Right cardiac atrium (tissue), 5 donors: ENCODE measurements at regions of chr3 and their contacts with region 1.

Region 1: DNA sequence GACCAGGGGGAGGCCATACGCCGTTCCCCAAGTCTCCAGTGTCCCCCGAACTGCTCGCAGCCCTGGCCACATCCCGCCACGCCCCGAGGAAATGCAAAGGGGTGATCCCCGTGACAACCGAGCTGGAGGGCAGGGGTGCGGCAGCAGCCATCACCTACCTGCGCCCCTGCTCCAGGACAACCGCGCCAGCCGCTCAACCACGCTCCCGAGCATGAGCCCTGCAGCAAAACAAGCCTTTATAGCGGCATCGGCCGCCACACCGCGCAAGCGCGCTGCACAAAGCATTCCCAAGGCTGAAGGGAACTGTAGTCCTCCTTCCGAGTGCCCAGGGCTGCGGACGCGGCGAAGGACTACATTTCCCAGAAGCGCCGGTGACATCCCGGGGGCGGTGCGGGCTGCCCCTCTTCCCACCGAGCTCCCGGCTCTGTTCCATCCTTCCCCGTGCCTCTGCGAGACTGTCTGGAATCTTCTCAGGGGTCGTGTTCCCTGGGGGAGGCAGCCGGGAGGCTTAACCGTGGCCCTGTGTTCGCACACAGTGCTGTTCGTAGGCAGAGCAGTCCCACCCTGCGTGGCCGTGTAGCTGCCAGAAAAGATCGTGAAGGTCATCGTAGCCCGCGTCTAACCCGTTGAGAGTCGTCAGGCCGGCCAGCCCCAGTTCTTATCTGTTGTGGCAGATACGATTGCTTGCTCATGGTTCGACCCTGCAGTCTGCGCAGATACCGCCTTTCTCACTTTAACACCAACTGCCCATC is at the start of gene ABCC5:
- DNase-seq: peak; percentile 96 to 97 (median 97)
- ATAC-seq: peak; percentile 99
- H3K4me3 ChIP-seq: peak within 1 kb of the TSS; percentile 70
- H3K27ac ChIP-seq: peak within 1 kb of the TSS; percentile 76
- H3K4me1 ChIP-seq: peaks cover 4% of the 10 kb centered on the region
- H3K27me3 ChIP-seq: no peaks in the 10 kb centered on the region
- total RNA-seq, gene ABCC5: 43.5 to 60.7 (median 52.7) TPM

Region 2: DNA sequence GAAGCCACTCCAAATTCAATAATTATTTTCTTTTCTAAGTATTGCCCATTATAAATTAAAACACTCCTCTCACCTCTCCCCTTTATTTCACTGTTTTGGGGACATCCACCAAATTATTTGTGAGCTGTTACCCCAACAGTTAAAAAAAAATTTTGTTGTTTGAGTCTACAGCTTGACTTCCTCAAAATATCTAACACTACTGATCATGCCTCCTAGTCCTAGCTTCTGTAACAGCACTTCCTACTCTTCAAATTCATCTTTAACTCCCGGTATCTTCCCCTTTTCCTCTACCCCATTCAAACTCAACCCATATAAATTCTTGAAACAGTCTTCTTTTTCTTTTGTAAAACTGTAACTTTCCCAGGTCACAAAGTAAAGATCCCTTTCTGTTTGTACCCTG is 149.1 kb before region 1 on chr3:
- intact Hi-C with region 1: no loop called
- DNase-seq: no peak
- ATAC-seq: no peak
- H3K4me3 ChIP-seq: no peak overlapping the region
- H3K27ac ChIP-seq: no peak overlapping the region
- H3K4me1 ChIP-seq: peaks cover 2% of the 10 kb centered on the region
- H3K27me3 ChIP-seq: no peaks in the 10 kb centered on the region

Region 3: DNA sequence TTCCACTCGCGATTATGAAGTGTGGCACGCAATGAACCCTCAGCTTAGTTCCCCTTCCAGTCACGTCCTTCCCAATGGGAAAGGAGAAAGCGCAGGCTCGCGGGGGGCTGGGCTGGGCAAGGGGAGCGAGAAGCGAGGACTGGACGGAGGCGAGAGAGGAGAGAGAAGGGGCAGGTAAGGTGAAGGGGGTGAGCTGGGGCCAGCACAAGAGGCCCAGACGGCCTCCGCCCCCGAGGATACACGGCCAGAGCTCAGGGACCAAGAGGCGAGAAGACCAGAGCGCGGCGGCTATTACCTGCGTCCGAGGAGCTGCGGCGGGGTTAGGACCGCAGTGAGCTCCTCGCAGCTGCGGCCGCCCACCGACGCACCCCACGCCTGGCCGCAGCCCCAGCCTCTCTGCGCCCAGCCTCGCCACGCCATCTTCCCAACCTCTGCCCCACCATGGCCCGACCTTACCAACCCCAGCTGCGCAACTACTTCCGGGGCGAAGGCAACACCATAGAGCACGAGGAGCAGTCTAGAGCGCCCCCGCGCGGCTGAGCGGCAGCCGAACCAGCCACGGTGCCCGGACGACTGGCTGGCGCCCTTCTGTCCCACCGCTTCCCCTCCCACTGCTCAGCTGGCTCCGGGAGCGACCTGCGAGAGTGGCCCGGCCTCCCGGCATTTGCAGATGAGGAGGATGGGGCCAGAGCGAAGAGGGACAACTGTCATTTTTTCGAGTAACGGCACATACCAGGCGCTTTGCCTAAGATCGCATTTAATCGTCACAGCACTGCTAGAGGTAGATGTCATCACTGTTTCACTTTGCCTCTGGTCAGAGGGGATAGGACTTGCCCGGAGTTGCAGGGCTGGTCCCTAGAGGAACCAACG is 133.2 kb before region 1 on chr3 and contains the start of gene PARL:
- intact Hi-C with region 1: loop called in 1 of 4 experiments (anchors 10 kb)
- DNase-seq: peak; percentile 97 to 99 (median 98)
- ATAC-seq: peak; percentile 100
- H3K4me3 ChIP-seq: peak within 1 kb of the TSS; percentile 71
- H3K27ac ChIP-seq: peak within 1 kb of the TSS; percentile 26
- H3K4me1 ChIP-seq: no peaks in the 10 kb centered on the region
- H3K27me3 ChIP-seq: no peaks in the 10 kb centered on the region
- total RNA-seq, gene PARL: 53.6 to 82.2 (median 62.3) TPM

Region 4: GRCh38 chr3:184039414-184039813 is 21.6 kb after region 1 on chr3:
- intact Hi-C with region 1: loop called in 1 of 4 experiments (anchors 2 kb)
- DNase-seq: no peak
- ATAC-seq: no peak
- H3K4me3 ChIP-seq: no peak overlapping the region
- H3K27ac ChIP-seq: no peak overlapping the region
- H3K4me1 ChIP-seq: no peaks in the 10 kb centered on the region
- H3K27me3 ChIP-seq: no peaks in the 10 kb centered on the region